Ovary (tissue), 10 donors: ENCODE measurements at regions of chr2 and their contacts with region 1.

Region 1: DNA sequence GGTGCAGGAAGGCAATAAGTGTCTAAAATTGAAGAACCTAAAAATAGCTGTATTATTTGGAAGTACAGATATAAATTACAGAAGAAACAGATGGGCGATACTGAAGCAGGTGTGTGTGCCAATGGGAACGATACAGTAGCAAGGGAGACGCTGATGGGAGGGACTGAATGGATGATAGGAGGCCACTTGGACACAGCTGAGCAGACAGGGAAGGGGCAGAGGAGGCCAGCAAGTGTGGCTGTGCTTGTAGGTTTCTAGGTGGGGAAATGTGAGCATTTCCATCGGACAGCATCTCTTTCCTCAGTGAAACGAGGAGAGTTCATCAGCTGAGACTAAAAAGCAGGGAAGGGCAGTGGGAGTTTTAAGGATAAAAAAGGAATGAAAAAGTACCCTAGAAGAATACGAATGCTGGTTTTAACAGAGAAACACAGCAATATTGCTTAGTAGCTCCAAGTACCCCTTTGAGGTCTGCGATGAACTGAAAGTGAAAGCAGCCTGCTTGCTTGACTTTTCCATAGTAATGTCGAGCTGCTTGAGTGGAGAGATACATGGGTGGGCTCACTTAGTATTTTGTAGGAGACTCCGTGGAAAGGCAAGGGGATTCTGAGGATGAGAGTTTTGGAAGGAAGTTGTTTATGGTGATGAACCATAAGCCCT is 91.7 kb upstream of the EPC2 start:
- DNase-seq: no peak
- H3K4me3 ChIP-seq: peak overlapping the region; percentile 35
- H3K27ac ChIP-seq: peak overlapping the region in 1 of 2 donors; percentile 11
- H3K4me1 ChIP-seq: no peaks in the 10 kb centered on the region
- H3K27me3 ChIP-seq: no peaks in the 10 kb centered on the region
- CTCF ChIP-seq: no peak
- EP300 ChIP-seq: no peak
- POLR2A ChIP-seq: no peak

Region 2: DNA sequence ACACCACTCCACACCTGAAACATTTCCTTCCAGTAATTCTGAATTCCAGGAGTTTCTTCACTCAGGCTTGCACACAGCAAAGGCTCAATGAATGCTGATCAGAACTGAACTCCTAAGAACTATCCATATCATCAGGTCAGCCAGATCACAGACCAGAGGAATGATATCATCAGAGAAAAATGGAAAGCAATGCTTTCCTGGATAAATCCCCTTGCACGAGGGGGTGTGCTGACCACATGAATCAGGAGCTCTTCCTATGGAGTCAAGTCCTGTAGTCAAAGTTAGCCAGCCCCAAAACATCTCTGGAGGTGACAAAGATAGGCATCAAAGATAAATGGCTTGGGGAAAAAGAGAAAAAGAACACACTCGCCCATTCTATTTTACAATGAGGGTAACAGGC is 791.8 kb before region 1 on chr2:
- intact Hi-C with region 1: loop called in 1 of 4 experiments (anchors 5 kb)
- DNase-seq: no peak
- H3K4me3 ChIP-seq: no peak overlapping the region
- H3K27ac ChIP-seq: no peak overlapping the region
- H3K4me1 ChIP-seq: no peaks in the 10 kb centered on the region
- H3K27me3 ChIP-seq: no peaks in the 10 kb centered on the region
- CTCF ChIP-seq: no peak
- EP300 ChIP-seq: no peak
- POLR2A ChIP-seq: no peak